ENCODE measurements at regions of chr6 and their contacts with region 1.

Region 1: DNA sequence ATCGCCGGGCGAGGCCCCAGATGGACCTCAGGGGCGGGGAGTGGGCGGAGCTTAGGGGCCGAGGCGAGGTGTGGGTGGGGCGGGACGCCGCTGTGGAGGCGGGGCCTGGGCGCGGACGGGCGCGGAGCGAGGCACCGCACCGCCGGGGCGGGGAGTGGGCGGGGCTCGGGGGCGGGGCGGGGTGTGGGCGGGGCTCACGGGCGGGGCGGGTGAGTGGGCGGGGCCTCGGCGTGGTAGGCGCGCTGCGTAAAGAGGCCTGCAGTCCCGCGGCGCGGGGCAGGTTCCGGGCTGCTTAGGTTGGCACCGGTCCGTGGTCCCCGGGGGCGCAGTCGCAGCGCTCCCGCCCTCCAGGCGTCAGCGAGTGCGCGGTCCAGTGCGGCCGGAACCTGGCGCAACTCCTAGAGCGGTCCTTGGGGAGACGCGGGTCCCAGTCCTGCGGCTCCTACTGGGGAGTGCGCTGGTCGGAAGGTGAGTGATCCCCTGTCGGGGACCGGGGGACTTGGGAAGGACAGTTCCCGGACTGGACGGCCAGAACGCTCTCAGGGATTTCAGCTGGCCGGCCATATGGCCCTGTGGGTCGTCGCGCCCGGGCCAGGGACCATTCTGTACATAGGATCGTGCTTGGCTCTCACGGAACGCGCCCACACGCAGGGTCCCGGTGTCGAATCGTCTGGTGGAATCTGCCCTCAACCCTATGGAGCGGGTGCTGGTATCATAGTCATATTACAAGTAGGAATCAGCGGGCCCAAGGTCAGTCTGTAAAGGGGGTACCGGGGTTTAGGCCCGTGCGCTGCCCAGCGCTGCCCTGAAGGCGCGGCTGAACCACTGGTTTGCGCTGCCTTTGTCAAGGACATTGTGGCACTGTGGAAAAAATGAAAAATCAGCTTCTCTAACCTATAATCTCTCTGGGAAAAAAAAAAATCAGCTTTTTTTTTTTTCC is at the start of gene NQO2:
- DNase-seq: no peak
- H3K4me3 ChIP-seq: peak within 1 kb of the TSS; percentile 85
- CTCF ChIP-seq: no peak

Region 2: DNA sequence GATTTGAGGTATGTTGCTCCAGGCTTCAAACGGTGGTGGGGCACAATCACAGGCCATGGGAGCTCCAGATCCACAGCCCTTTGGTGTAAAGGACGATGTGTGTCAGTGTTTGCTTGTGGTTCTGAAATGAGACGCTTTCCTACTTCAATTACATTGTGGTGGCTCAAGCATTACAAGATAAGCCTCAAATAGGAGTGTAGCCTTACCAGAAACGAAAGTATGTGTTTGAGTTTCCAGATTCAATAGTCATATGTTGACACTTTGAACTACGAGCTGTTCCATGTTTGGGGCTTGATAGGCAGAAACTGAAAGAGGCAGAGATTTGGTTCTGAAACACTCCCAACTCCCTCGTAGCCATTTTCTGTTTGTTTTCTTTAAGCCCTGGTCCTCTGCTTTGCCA is 436.3 kb before region 1 on chr6:
- CTCF ChIA-PET with region 1: no interaction called
- POLR2A ChIA-PET with region 1: no interaction called
- DNase-seq: no peak
- H3K4me3 ChIP-seq: no peak overlapping the region
- CTCF ChIP-seq: no peak

Region 3: DNA sequence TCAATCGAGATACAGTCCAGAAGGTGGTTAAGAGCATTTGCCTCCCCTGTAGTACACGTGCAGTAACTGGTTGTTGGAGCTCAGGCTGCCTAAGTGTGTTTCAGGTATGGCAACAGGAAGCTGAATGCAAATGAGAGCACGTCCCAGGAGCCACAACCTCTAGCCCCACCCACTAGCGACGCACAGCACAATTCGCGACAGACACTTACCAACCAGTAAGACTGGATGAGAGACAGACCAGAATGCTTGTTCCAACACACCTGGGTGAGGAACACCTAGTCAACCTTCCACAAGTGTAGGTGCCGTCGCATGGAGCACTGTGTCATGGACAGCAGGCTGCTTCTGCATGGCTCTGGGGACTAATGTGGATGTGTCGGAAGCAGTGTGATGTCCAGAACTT is 151.0 kb before region 1 on chr6:
- CTCF ChIA-PET with region 1: interaction called, 11 read pairs
- POLR2A ChIA-PET with region 1: interaction called, 3 read pairs
- DNase-seq: no peak
- H3K4me3 ChIP-seq: no peak overlapping the region
- CTCF ChIP-seq: no peak

Region 4: DNA sequence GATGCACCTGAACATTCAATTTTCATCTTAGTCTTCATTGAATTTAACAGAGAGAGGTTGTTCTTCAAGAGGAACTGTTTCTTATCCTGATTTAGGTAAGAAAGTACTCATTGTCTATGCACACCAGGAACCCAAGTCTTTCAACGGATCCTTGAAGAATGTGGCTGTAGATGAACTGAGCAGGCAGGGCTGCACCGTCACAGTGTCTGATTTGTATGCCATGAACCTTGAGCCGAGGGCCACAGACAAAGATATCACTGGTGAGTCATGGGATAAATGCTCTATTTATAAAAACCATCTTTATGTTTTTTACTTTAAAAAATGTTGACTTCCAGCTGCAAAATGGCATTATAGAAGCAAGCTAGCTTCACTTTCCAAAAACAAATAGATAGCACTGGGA is 10.0 kb after region 1 on chr6:
- CTCF ChIA-PET with region 1: interaction called, 33 read pairs
- POLR2A ChIA-PET with region 1: no interaction called
- DNase-seq: no peak
- H3K4me3 ChIP-seq: no peak overlapping the region
- CTCF ChIP-seq: no peak

Region 5: GRCh38 chr6:3017304-3017703 is 17.4 kb after region 1 on chr6:
- CTCF ChIA-PET with region 1: interaction called, 41 read pairs
- POLR2A ChIA-PET with region 1: no interaction called
- DNase-seq: no peak
- H3K4me3 ChIP-seq: no peak overlapping the region
- CTCF ChIP-seq: no peak

Region 6: GRCh38 chr6:3023663-3024483 is 24.0 kb after region 1 on chr6:
- CTCF ChIA-PET with region 1: interaction called, 41 read pairs
- POLR2A ChIA-PET with region 1: interaction called, 5 read pairs
- DNase-seq: no peak
- H3K4me3 ChIP-seq: no peak overlapping the region
- CTCF ChIP-seq: no peak

Region 7: GRCh38 chr6:3052481-3053230 is 52.8 kb after region 1 on chr6:
- CTCF ChIA-PET with region 1: interaction called, 69 read pairs
- POLR2A ChIA-PET with region 1: interaction called, 6 read pairs
- DNase-seq: no peak
- H3K4me3 ChIP-seq: no peak overlapping the region
- CTCF ChIP-seq: no peak

Region 8: GRCh38 chr6:3058957-3059356 is 59.1 kb after region 1 on chr6:
- CTCF ChIA-PET with region 1: interaction called, 69 read pairs
- POLR2A ChIA-PET with region 1: interaction called, 6 read pairs
- DNase-seq: no peak
- H3K4me3 ChIP-seq: no peak overlapping the region
- CTCF ChIP-seq: no peak

Region 9: DNA sequence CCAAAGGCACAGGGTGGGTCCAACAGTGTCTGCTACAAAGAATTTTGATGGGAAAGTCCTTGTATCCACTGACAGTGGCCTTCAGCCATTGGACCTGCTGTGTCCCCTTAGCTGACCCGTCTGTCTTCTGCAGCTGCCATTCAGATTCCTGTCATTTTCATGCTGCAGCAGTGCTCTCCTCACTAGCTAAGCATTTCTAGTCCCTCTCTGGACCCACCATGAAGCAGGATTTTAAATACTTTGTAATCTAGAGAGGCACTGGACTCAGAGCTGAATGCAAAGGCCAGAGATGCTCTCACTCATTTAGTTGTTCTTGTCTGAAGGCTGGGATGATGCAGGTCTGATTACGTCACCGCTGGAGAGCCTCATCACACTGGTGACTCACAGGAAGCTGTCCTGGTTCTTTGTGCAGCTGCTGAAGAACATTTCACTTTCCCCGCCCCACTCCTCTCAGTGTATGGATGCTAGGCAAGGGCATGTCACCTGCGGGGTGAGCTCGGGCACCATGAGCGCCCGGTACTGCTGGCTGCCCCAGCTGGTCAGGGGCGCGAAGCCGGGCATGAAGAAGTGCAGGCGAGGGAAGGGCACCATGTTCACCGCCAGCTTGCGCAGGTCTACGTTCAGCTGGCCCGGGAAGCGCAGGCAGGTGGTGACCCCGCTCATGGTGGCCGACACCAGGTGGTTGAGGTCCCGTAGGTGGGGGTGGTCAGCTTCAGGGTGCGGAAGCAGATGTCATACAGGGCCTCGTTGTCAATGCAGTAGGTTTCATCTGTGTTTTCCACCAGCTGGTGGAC is 176.9 kb after region 1 on chr6:
- CTCF ChIA-PET with region 1: no interaction called
- POLR2A ChIA-PET with region 1: no interaction called
- DNase-seq: peak; percentile 53
- H3K4me3 ChIP-seq: no peak overlapping the region
- CTCF ChIP-seq: no peak

Measured in AG04449 (cell line).